ENCODE measurements at regions of chr19 and their contacts with region 1.

Region 1: DNA sequence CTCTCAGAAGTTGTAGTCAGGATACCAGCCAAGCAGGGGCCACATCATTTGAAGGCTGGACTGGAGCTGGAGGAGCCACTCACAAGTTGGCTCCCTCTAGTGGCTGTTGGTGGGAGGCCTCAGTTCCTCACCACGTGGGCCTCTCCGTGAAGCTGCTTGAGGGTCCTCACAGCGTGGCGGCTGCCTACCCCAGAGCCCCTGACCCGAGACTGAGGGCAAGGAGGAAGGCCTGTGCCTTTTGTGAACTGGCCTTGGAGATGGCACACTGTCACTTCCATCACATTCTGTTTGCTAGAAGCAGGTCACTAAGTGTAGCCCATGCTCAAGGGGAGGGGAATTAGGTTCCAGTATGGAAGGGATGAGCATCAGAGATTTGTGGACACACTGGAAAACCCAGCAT is 14.6 kb downstream of the GNA11 start:
- DNase-seq: peak; percentile 82
- H3K4me3 ChIP-seq: no peak overlapping the region
- H3K27ac ChIP-seq: no peak overlapping the region
- H3K4me1 ChIP-seq: peaks cover 7% of the 10 kb centered on the region
- CTCF ChIP-seq: peak; percentile 96

Region 2: DNA sequence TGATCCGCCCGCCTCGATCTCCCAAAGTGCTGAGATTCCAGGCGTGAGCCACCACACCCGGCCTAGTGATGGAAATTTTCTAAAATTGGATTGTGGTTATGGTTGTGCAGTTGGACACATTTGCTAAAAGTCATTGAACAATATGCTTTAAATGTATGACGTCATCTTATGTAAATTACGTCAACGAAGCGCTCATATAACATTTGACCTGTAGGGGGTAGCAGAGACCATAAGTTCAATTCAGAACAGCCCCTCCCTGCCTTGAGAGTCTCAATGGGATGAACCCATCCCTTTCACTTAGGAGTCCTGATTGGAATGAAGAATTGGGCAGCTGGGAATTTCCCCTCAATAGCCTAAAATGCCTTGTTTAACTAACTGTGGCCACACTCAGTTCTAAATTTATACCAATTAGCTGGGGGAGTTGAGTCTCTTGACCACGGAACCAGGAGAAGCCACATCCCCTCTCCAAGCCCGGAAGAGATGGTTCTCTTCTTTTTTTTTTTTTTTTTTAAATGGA is 146.7 kb before region 1 on chr19:
- CTCF ChIA-PET with region 1: interaction called, 4 read pairs
- POLR2A ChIA-PET with region 1: no interaction called
- intact Hi-C with region 1: loop called (anchors 1 kb)
- DNase-seq: peak; percentile 87
- H3K4me3 ChIP-seq: no peak overlapping the region
- H3K27ac ChIP-seq: no peak overlapping the region
- H3K4me1 ChIP-seq: peaks cover 19% of the 10 kb centered on the region
- CTCF ChIP-seq: peak; percentile 92

Region 3: DNA sequence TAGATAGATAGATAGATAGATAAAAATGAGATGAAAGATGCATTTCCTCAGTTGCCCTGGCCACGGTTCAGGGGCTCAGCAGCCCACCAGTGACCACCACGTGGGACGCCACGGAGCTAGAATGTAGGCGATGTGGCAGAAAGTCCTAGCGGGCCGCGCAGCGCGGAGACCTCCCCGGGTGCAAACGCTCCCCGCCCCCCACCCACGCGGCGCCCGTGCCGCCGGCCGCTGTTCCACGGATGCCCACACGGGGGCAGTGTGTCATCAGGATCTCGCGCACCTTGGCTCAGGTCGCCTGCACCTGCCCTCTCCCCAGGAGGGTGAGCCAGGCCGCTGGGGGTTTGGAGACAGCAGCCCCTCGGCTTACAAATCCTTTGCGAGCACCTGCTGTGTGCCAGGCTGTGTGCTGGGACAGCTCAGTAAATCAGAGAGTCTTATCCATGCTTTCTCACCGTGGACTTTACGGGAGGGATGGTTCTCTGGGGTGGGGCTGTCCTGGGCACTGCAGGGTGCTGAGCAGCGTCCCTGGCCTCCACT is 32.8 kb before region 1 on chr19:
- CTCF ChIA-PET with region 1: interaction called, 3 read pairs
- POLR2A ChIA-PET with region 1: no interaction called
- intact Hi-C with region 1: loop called (anchors 1 kb)
- DNase-seq: peak; percentile 72
- H3K4me3 ChIP-seq: peak overlapping the region; percentile 42
- H3K27ac ChIP-seq: no peak overlapping the region
- H3K4me1 ChIP-seq: peaks cover 20% of the 10 kb centered on the region
- CTCF ChIP-seq: peak; percentile 90

Region 4: GRCh38 chr19:3087769-3088168 is 21.0 kb before region 1 on chr19:
- CTCF ChIA-PET with region 1: no interaction called
- POLR2A ChIA-PET with region 1: no interaction called
- intact Hi-C with region 1: no loop called
- DNase-seq: no peak
- H3K4me3 ChIP-seq: no peak overlapping the region
- H3K27ac ChIP-seq: no peak overlapping the region
- H3K4me1 ChIP-seq: no peaks in the 10 kb centered on the region
- CTCF ChIP-seq: no peak